Activated T-helper 1 cell treated with anti-CD3 and anti-CD28 coated beads, Interleukin-12 subunit alpha, Interleukin-12 subunit beta, Interleukin-2, Interleukin-4 antibody, amounts not matched to agents 30 ng/mL and 10 ng/mL and 1 ng/mL, durations not matched to agents 14 hours and 24 hours and 36 hours (primary cell): ENCODE measurements at regions of chr19 and their contacts with region 1.

Region 1: DNA sequence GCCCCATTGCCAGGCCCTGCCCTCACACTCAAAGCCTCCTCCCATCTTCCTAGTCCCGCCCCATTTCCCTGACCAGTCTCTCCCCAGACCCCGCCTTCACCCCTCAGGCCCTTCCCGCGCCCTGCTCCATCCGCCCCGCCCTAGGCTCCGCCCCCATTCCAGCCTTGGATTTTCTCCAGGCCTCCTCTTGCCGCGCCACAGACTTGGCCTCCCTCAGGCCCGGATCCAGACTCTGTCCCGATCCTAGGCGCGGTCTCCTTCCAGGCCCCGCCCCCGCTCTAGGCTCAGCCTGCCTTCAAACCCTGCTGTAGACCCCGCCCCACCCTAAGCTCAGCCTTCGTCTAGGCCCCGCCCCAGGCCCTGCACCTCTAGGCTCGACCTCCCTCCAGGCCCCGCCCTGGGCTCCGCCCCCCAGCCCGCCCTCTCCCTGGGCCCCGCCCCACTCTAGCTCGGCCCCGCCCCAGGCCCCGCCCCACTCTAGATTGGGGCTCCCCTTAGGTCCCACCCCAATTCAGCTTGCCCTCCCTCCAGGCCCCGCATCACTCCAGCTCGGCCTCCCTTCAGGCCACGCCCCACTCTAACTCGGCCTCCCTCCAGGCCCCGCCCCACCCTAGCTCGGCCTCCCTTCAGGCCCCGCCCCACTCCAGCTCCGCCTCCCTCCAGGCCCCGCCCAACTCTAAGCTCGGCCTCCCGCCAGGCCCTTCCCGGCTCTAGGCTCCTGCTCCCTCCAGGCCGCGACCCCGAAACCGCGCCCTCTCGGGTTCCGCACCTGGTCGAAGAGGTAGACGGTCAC is 18.5 kb downstream of the LMTK3 start:
- DNase-seq: peak; percentile 82
- H3K4me3 Mint-ChIP-seq: peak overlapping the region; percentile 68
- H3K27ac Mint-ChIP-seq: peak overlapping the region; percentile 29
- H3K4me1 Mint-ChIP-seq: peaks cover 27% of the 10 kb centered on the region
- H3K27me3 Mint-ChIP-seq: peaks cover 21% of the 10 kb centered on the region

Region 2: GRCh38 chr19:48170038-48170812 is 322.9 kb before region 1 on chr19 and contains the starts of genes LIG1 and ZSWIM9:
- intact Hi-C with region 1: loop called (anchors 1 kb)
- DNase-seq: peak; percentile 89
- H3K4me3 Mint-ChIP-seq: peak within 1 kb of the TSS; percentile 97
- H3K27ac Mint-ChIP-seq: peak within 1 kb of the TSS; percentile 100
- H3K4me1 Mint-ChIP-seq: peaks cover 33% of the 10 kb centered on the region
- H3K27me3 Mint-ChIP-seq: peaks cover 3% of the 10 kb centered on the region
- total RNA-seq, gene LIG1: 133 and 140 TPM in 2 replicates
- total RNA-seq, gene ZSWIM9: 8.4 and 9.5 TPM in 2 replicates

Region 3: DNA sequence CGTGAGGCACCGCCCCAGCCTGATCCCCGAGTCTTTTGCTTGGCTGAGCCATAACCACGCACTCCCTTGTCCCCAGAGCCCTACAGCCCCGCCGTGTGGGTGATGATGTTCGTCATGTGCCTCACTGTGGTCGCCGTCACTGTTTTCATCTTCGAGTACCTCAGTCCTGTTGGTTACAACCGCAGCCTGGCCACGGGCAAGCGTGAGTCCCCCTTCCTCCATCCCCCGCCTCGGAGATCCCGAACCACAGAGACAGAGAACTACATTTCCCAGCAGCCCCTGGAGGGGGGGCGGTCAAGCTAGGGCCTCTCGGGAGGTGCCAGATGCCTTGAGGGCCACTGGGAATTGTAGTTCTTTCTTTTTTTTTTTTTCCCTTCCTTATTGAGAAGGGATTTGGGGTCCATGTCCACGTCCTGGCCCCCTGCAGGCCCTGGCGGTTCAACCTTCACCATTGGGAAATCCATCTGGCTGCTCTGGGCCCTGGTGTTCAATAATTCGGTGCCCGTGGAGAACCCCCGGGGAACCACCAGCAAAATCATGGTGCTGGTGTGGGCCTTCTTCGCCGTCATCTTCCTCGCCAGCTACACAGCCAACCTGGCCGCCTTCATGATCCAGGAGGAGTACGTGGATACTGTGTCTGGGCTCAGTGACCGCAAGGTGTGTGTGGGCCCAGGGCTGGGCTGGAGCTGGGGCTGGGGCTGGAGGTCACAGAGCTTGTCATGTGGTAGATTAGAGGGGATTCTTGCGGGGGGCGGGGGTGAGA is 73.8 kb before region 1 on chr19:
- intact Hi-C with region 1: loop called (anchors 1 kb)
- DNase-seq: peak; percentile 66
- H3K4me3 Mint-ChIP-seq: peak overlapping the region; percentile 75
- H3K27ac Mint-ChIP-seq: peak overlapping the region; percentile 65
- H3K4me1 Mint-ChIP-seq: peaks cover 26% of the 10 kb centered on the region
- H3K27me3 Mint-ChIP-seq: peaks cover 18% of the 10 kb centered on the region

Region 4: DNA sequence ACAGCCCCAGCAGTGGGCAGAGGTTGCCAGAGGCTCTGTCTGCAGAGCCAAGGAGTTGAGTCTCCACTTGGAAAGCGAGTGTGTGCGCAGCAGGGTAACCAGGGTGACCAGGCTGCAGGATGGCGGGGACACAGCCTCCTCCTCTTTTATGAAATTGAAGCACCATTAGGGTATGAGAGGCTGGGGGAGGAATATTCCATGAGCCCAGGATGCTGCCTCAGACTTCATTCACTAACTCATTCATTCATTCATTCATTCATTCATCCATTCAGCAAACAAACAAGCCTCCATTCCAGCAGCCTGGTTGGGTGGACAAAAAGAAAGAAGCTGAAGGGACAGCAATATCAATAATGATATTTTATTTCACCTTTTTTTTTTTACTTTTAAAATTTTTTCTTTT is 25.1 kb after region 1 on chr19:
- intact Hi-C with region 1: no loop called
- DNase-seq: no peak
- H3K4me3 Mint-ChIP-seq: no peak overlapping the region
- H3K27ac Mint-ChIP-seq: no peak overlapping the region
- H3K4me1 Mint-ChIP-seq: peaks cover 5% of the 10 kb centered on the region
- H3K27me3 Mint-ChIP-seq: peaks cover 3% of the 10 kb centered on the region

Region 5: DNA sequence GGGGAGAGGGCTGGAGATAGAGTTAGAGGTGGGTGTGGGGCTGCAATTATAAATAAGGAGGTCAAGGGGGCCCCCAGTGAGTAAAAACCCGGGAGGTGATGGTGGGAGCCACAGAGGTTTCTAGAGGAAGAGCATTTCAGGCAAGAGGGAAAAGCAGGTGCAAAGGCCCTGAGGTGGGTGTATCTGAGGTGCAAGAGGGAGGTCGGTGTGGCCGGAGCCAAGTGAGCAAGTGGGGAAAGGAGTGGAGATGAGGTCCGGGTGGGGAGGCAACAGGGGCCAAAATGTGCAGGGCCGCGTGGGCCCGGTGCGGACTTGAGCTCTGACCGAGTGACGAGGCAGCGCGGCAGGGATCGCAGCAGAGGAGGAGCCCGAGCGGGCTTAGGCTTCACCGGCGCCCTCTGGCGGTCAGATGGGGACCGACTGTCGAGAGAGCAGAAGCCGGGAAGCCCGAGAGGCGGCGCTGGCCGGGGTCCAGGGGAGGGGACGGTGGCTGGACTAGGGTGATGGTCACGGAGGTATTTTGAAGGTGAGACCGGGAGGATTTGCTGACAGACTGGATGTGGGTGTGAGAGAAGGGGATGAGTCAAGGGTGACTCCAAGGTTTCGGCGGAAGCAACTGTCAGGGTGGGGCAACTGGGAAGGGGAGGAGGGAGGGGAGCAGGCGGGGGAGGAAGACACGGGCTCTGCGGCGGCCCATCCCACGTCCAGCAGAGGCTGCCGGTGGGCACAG is 95.7 kb after region 1 on chr19:
- intact Hi-C with region 1: loop called (anchors 1 kb)
- DNase-seq: peak; percentile 81
- H3K4me3 Mint-ChIP-seq: peak overlapping the region; percentile 63
- H3K27ac Mint-ChIP-seq: peak overlapping the region; percentile 60
- H3K4me1 Mint-ChIP-seq: peaks cover 16% of the 10 kb centered on the region
- H3K27me3 Mint-ChIP-seq: no peaks in the 10 kb centered on the region

Region 6: DNA sequence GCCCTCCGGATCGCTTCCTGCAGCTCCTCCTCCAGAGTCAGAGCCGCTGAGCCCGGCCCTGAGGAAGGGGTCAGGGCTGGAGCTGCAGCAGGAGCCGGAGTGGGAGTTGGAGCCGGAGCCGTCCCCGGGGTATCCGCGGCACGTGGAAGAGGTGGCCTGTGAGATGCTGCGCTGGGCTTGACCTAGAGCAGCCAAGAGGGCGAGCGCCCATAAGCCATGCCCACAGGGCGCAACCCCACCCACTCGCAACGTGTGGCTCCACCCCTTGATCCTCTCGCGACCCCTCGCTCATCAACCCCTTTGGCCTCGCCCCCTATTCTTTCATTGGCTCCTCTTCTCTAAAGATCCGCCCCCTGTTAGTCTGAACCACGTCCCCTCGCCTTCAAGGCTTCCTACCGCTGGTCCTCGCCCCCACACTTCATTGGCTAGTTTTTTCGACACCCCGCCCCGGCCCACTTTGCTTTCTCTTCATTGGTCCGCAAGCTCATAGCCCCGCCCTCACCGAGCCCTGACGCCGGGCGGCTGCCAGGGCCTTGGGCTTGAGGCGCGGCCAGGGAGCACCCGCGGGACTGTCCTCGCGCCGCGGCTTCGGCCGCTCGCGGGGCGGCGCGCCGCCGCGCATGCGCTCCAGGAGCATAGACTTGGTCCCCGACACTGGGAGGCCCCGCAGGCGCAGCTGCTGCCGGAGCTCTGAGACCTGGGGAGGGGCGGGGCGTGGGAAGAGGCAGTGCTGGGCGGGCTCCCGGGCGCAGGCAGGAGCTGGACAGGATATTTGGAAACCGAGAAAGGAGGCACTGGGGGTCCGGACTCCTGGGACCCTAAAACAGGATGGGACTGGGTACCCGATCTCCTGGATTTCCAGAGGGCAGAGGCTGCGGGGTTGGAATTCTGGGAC is 221.0 kb after region 1 on chr19:
- intact Hi-C with region 1: loop called (anchors 5 kb)
- DNase-seq: peak; percentile 98
- H3K4me3 Mint-ChIP-seq: peak overlapping the region; percentile 80
- H3K27ac Mint-ChIP-seq: peak overlapping the region; percentile 83
- H3K4me1 Mint-ChIP-seq: peaks cover 8% of the 10 kb centered on the region
- H3K27me3 Mint-ChIP-seq: peaks cover 1% of the 10 kb centered on the region

Region 7: GRCh38 chr19:48738557-48739399 is 245.7 kb after region 1 on chr19:
- intact Hi-C with region 1: loop called (anchors 1 kb)
- DNase-seq: peak; percentile 85
- H3K4me3 Mint-ChIP-seq: peak overlapping the region; percentile 64
- H3K27ac Mint-ChIP-seq: peak overlapping the region; percentile 52
- H3K4me1 Mint-ChIP-seq: peaks cover 13% of the 10 kb centered on the region
- H3K27me3 Mint-ChIP-seq: no peaks in the 10 kb centered on the region